ENCODE measurements at regions of chr1 and their contacts with region 1.

Region 1: DNA sequence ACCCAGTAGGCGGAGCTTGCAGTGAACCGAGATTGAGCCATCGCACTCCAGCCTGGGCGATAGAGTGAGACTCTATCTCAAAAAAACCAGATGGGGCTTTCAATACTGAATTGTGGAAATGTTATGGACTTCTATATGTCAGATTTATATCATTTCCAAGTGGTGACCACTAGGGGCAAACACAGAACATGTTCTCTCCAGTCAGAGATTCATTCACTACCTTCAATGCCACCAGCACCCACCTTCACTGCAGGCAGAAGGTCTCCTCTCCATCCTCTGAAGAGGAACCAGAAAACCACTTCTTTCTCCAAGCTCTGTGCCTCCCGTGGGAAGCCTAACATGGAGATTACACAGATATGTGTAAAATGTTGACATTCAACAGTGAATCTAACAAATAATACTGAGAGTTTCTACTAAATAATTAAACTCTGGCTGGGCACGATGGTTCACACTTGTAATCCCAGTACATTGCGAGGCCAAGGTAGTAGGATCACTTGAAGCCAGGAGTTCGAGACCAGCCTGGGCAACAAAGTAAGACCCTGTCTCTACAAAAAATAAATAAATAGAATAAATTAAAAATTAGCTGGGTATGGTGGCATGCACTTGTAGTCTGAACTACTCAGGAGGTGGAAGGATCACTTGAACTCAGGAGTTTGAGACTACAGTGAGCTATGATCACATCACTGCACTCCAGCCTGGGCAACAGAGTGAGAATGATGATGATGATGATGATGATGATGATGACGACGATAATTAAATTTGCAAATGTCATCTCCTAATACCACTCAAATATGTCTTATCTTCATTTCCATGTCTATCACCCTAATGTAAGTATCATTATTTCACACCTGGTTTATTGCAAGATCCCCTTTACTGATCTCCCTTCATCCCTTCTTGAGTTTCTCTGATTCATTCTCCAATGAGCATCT is 151.1 kb downstream of the ZNF281 start:
- DNase-seq: peak in 2 of 5 donors; percentile 4 to 12
- H3K4me3 ChIP-seq: no peak overlapping the region
- H3K4me3 Mint-ChIP-seq: no peak overlapping the region
- H3K27ac ChIP-seq: no peak overlapping the region
- H3K27ac Mint-ChIP-seq: no peak overlapping the region
- H3K4me1 ChIP-seq: no peaks in the 10 kb centered on the region
- H3K4me1 Mint-ChIP-seq: peaks cover 0 to 4% (median 0%) of the 10 kb centered on the region in 4 donors
- H3K27me3 ChIP-seq: no peaks in the 10 kb centered on the region
- H3K27me3 Mint-ChIP-seq: peaks cover 0 to 12% of the 10 kb centered on the region in 2 donors

Region 2: DNA sequence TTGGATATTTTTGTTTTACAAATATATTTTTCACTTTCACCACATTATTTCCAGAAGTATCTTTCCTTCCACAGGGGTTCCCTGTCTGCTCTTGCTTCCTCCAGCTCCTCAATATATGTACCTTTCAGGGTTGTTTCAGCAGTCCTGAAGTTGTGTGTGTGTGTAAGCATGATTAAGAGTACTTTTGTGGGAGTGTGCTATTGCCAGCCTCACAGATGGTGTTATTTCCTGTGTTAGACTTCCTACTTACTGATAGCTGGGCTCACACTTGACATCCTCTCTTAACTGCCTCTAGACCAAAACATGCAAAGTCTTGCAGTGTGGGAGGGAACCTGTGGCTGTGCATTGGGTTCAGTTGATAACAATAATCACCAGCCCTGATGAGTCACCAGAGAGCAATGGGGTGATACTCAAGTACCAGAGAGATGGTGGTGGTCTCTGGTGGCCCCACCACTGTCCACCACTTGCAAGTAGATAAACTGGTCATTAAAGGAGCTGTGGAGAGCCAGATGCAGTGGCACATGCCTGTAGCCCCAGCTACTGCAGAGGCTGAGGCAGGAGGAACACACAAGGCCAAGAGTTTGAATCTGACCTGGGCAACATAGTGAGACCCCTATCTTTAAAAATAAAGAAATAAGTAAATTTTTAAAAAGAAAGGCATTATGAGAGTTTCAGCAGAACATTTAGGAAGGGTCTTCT is 104.5 kb before region 1 on chr1:
- CTCF ChIA-PET with region 1: no interaction called
- POLR2A ChIA-PET with region 1: no interaction called
- intact Hi-C with region 1: loop called (anchors 10 kb)
- DNase-seq: peak; percentile 50 to 77 (median 54)
- H3K4me3 ChIP-seq: no peak overlapping the region
- H3K4me3 Mint-ChIP-seq: peak overlapping the region in 7 of 8 donors; percentile 56 to 94 (median 77)
- H3K27ac ChIP-seq: peak overlapping the region; percentile 55
- H3K27ac Mint-ChIP-seq: peak overlapping the region; percentile 54 to 97 (median 91)
- H3K4me1 ChIP-seq: peaks cover 36% of the 10 kb centered on the region
- H3K4me1 Mint-ChIP-seq: peaks cover 18 to 43% (median 24%) of the 10 kb centered on the region in 4 donors
- H3K27me3 ChIP-seq: no peaks in the 10 kb centered on the region
- H3K27me3 Mint-ChIP-seq: no peaks in the 10 kb centered on the region

Region 3: GRCh38 chr1:200179126-200179780 is 79.5 kb before region 1 on chr1:
- CTCF ChIA-PET with region 1: no interaction called
- POLR2A ChIA-PET with region 1: no interaction called
- intact Hi-C with region 1: no loop called
- DNase-seq: no peak
- H3K4me3 ChIP-seq: no peak overlapping the region
- H3K4me3 Mint-ChIP-seq: no peak overlapping the region
- H3K27ac ChIP-seq: no peak overlapping the region
- H3K27ac Mint-ChIP-seq: no peak overlapping the region
- H3K4me1 ChIP-seq: peaks cover 2% of the 10 kb centered on the region
- H3K4me1 Mint-ChIP-seq: peaks cover 1 to 5% (median 4%) of the 10 kb centered on the region in 4 donors
- H3K27me3 ChIP-seq: no peaks in the 10 kb centered on the region
- H3K27me3 Mint-ChIP-seq: peaks cover 3 to 15% of the 10 kb centered on the region in 2 donors